AG04449 (cell line): ENCODE measurements at regions of chr1 and their contacts with region 1.

Region 1: DNA sequence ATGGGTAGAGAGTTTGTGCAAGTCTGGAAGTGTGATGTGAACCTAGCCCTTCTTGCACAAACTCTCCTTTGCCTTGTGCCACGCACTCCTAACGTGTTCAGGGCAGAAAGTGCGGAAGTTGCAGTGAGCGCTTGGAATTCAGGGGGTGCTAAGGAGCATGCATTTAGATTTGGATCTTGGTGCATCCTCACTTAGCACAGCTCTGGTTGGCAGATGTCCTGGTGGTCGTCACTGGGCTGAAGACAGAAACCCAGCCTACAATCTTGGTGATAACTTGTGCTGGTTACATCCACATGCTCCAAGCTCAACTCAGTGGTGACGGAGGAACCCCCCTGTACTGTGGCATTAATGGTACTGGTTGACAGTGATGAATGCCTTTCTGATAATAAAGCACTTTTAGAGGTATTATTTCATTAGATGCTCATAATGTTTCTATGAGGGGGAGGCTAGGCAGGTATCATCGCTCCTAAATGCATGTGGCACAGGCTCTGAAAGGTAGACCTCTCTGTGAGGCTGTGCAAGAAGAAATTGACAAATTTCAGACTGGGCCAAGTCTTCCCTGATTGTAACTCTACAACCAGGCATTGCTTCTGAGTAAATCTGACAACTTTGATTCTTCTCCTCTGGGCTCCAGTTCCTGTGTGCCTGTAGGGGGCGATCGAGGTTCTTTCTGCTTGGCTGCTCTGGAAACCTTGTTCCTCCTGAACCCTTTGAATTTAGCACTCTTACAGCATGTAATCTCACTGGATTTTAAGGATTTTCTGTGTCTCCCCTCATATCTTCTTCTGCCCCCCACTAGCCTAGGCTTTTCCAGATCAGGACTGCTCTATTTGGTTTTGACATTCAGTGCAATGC is 40.6 kb downstream of the MAPKAPK2 start:
- DNase-seq: no peak
- H3K4me3 ChIP-seq: no peak overlapping the region
- CTCF ChIP-seq: peak; percentile 74

Region 2: GRCh38 chr1:206117151-206117948 is 608.0 kb before region 1 on chr1 and contains the start of gene AVPR1B:
- CTCF ChIA-PET with region 1: no interaction called
- POLR2A ChIA-PET with region 1: no interaction called
- DNase-seq: no peak
- H3K4me3 ChIP-seq: peak within 1 kb of the TSS; percentile 40
- CTCF ChIP-seq: no peak

Region 3: GRCh38 chr1:206430031-206430983 is 295.0 kb before region 1 on chr1:
- CTCF ChIA-PET with region 1: no interaction called
- POLR2A ChIA-PET with region 1: no interaction called
- DNase-seq: peak; percentile 62
- H3K4me3 ChIP-seq: no peak overlapping the region
- CTCF ChIP-seq: no peak

Region 4: GRCh38 chr1:206635080-206635977 is 90.0 kb before region 1 on chr1 and contains the start of gene DYRK3:
- CTCF ChIA-PET with region 1: interaction called, 10 read pairs
- POLR2A ChIA-PET with region 1: no interaction called
- DNase-seq: no peak
- H3K4me3 ChIP-seq: peak within 1 kb of the TSS; percentile 86
- CTCF ChIP-seq: no peak

Region 5: GRCh38 chr1:206693029-206693428 is 32.3 kb before region 1 on chr1:
- CTCF ChIA-PET with region 1: interaction called, 38 read pairs
- POLR2A ChIA-PET with region 1: interaction called, 3 read pairs
- DNase-seq: no peak
- H3K4me3 ChIP-seq: peak overlapping the region; percentile 6; the same call in 1 of the 2 replicates
- CTCF ChIP-seq: no peak

Region 6: GRCh38 chr1:206706298-206706791 is 19.0 kb before region 1 on chr1:
- CTCF ChIA-PET with region 1: interaction called, 166 read pairs
- POLR2A ChIA-PET with region 1: no interaction called
- DNase-seq: peak; percentile 75
- H3K4me3 ChIP-seq: peak overlapping the region; percentile 2
- CTCF ChIP-seq: no peak

Region 7: DNA sequence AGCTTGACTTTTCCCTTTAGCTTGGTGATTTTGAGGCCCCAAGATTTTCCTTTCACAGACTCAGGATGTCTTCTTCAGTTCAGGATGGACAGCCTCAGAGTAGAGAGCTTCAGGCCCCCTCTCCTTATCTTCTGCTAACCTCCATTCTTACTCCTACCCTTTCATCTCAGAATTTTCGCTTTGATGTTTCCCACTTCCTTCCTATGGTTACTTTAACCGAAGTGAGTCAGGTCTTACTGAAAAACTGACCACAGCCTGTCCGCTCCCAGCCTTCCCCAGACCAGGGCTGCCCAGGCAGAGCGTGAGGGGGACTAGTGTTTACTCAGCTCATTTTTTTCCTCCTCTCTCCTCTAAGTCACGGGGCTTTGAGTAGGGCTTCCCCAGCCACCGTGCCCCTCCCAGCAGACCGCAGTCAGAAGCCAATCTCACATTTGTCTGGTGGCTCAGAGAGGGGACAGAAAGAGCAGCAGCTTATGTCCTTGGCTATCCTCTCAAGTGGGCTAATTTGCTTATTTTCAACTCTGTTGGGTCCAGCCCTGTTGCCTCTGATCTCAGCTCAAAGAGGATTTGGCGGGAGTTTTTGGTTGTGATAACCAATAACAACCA is 41.0 kb after region 1 on chr1:
- CTCF ChIA-PET with region 1: interaction called, 12 read pairs
- POLR2A ChIA-PET with region 1: no interaction called
- DNase-seq: no peak
- H3K4me3 ChIP-seq: no peak overlapping the region
- CTCF ChIP-seq: no peak

Region 8: DNA sequence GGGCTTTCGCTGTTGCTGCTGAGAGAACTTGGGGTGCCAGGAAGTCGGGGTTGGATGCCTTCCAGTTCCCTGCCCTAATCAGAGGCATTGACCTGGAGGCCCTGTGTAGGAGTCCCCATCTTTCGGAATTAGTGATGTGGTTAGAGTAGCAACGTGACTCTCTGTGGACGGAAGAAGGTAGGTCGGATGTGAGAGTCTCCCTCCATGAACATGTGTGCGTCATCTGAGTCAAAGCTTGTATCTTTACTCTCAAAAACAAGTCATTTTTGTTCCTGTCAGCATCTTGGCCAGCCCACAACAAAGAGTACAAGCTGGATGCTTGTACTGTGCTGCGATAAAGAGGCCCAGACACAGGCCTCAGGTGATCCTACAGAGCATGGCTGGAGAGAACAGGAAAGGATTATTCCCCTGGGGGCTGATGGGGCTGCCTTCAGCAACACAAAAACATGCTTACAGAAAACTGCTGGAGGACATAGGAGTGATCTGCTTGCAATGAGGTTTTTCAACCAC is 77.9 kb after region 1 on chr1:
- CTCF ChIA-PET with region 1: interaction called, 89 read pairs
- POLR2A ChIA-PET with region 1: no interaction called
- DNase-seq: no peak
- H3K4me3 ChIP-seq: no peak overlapping the region
- CTCF ChIP-seq: no peak

Region 9: DNA sequence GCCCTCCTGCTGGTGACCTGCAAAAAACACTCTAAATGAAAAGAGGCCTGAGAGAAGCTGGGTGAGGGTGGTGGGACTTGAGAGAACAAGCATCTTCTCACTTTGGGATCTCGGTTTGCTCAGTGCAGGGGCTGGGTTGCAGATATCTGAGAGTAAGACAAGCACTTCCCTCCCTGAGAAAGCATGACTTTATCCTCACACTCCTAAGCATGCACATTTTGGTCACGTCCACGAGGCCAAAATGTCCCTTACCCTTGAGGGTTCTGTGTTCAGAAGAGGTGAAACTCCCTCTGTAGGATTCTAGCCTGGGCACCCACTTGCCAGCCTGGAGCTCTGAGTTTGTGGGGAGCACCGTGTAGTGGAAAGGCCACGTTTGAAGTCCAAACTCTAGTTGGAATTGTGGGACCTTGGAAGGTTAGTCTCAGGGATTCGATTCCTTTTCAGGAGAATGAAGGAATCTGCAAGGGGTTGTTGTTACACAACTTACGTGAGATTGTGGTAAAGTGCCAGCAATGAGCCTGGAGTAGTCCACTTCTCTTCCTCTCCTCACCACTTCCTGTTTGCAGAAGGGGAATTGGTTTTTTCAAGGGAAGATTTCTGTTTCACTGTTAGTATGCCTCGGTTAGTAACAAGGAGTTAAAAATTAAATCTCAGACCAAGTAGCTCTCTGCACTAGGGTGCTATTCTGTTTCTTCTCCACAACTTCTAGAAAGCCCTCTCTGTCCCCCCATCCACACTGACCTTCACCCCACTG is 241.9 kb after region 1 on chr1:
- CTCF ChIA-PET with region 1: no interaction called
- POLR2A ChIA-PET with region 1: no interaction called
- DNase-seq: no peak
- H3K4me3 ChIP-seq: no peak overlapping the region
- CTCF ChIP-seq: no peak